K562 (cell line): ENCODE measurements at regions of chr14 and their contacts with region 1.

Region 1: GRCh38 chr14:93655078-93655750 is 133.1 kb downstream of the PRIMA1 start:
- DNase-seq: peak; percentile 15 to 43 (median 23)
- ATAC-seq: peak; percentile 63; the same call in 2 of the 3 replicates
- H3K4me3 ChIP-seq: no peak overlapping the region
- H3K27ac ChIP-seq: no peak overlapping the region
- H3K4me1 ChIP-seq: no peaks in the 10 kb centered on the region
- H3K27me3 ChIP-seq: no peaks in the 10 kb centered on the region
- CTCF ChIP-seq: peak; percentile 45 to 55 (median 50); a peak in 5 of 6 replicates
- EP300 ChIP-seq: no peak
- POLR2A ChIP-seq: no peak
- RAD21 ChIP-seq: peak; percentile 38 to 57

Region 2: DNA sequence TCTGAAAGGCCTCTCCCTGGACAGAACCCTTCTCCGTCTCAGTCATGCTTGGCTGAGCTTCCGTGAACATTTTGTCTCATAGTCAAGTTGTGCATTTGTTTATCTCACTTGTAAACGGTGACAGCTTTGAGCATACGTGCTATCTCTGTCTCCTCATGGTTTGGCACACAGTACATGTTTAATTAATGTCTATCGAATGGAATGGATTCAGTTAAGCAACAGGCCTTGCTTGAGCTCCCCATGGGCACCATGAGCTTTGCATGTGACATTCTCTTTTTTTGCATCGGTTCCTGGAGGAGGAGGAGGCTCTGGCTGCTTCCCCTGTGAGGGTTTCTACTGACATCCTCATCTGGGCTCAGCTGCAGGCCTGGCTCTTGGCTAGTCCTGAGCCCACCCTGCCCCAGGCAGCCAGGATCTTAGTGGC is 53.1 kb after region 1 on chr14:
- CTCF ChIA-PET with region 1: no interaction called
- POLR2A ChIA-PET with region 1: no interaction called
- in situ Hi-C with region 1: no loop called
- intact Hi-C with region 1: no loop called
- DNase-seq: no peak
- ATAC-seq: no peak
- H3K4me3 ChIP-seq: no peak overlapping the region
- H3K27ac ChIP-seq: no peak overlapping the region
- H3K4me1 ChIP-seq: no peaks in the 10 kb centered on the region
- H3K27me3 ChIP-seq: peaks cover 3 to 12% of the 10 kb centered on the region in 2 experiments; a peak in 3 of 5 replicates
- CTCF ChIP-seq: no peak
- EP300 ChIP-seq: no peak
- POLR2A ChIP-seq: no peak
- RAD21 ChIP-seq: no peak

Region 3: GRCh38 chr14:93880021-93880820 is 225.0 kb after region 1 on chr14:
- CTCF ChIA-PET with region 1: no interaction called
- POLR2A ChIA-PET with region 1: interaction called, 3 read pairs
- in situ Hi-C with region 1: loop called (anchors 10 kb)
- intact Hi-C with region 1: no loop called
- DNase-seq: no peak
- ATAC-seq: no peak
- H3K4me3 ChIP-seq: no peak overlapping the region
- H3K27ac ChIP-seq: no peak overlapping the region
- H3K4me1 ChIP-seq: no peaks in the 10 kb centered on the region
- H3K27me3 ChIP-seq: no peaks in the 10 kb centered on the region
- CTCF ChIP-seq: no peak
- EP300 ChIP-seq: no peak
- POLR2A ChIP-seq: no peak
- RAD21 ChIP-seq: no peak

Region 4: DNA sequence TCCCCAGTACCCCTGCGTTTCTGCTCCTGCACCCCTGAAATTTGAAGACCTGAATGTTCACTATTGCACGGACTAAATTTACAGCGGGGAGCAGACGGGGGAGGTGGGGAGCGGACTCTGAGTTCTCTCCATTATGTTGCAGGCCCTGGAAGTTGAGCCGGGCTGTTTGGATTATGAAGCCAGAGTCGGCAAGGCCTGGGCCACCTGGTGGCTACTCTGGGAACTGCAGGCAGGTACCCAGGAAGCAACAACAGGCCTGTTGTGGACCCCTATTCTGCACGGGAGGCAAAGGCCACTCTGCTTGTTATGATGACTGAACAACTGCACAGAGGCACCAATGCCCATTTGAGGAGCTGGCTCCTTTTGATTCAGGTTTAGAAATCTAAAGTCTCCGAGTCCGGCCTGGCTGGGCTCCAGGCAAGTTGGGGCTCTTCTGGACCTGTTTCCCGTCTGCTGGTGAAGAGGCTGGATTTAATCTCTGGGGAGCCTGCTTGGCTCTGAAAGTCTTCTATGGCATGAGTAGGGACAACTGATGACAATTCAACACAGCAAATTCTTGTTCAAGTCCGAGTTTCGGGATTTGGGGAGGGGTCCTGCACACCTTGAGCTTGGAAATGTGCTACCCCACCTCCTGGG is 237.8 kb after region 1 on chr14:
- CTCF ChIA-PET with region 1: no interaction called
- POLR2A ChIA-PET with region 1: no interaction called
- in situ Hi-C with region 1: loop called (anchors 10 kb)
- intact Hi-C with region 1: loop called (anchors 2 kb)
- DNase-seq: peak; percentile 47 to 60 (median 58)
- ATAC-seq: peak; percentile 82
- H3K4me3 ChIP-seq: no peak overlapping the region
- H3K27ac ChIP-seq: no peak overlapping the region
- H3K4me1 ChIP-seq: no peaks in the 10 kb centered on the region
- H3K27me3 ChIP-seq: peaks cover 0 to 17% of the 10 kb centered on the region in 2 experiments; a peak in 2 of 5 replicates
- CTCF ChIP-seq: peak; percentile 70 to 83 (median 74)
- EP300 ChIP-seq: no peak
- POLR2A ChIP-seq: no peak
- RAD21 ChIP-seq: peak in 1 of 2 experiments; percentile 59; a peak in 3 of 4 replicates

Region 5: GRCh38 chr14:93906341-93907329 is 251.4 kb after region 1 on chr14:
- CTCF ChIA-PET with region 1: no interaction called
- POLR2A ChIA-PET with region 1: no interaction called
- in situ Hi-C with region 1: no loop called
- intact Hi-C with region 1: loop called (anchors 5 kb)
- DNase-seq: peak; percentile 60 to 68 (median 68)
- ATAC-seq: peak; percentile 94
- H3K4me3 ChIP-seq: no peak overlapping the region
- H3K27ac ChIP-seq: no peak overlapping the region
- H3K4me1 ChIP-seq: no peaks in the 10 kb centered on the region
- H3K27me3 ChIP-seq: no peaks in the 10 kb centered on the region; a peak in 1 of 5 replicates
- CTCF ChIP-seq: peak; percentile 59 to 73 (median 70)
- EP300 ChIP-seq: no peak
- POLR2A ChIP-seq: no peak
- RAD21 ChIP-seq: peak; percentile 22 to 59; a peak in 2 of 4 replicates

Region 6: DNA sequence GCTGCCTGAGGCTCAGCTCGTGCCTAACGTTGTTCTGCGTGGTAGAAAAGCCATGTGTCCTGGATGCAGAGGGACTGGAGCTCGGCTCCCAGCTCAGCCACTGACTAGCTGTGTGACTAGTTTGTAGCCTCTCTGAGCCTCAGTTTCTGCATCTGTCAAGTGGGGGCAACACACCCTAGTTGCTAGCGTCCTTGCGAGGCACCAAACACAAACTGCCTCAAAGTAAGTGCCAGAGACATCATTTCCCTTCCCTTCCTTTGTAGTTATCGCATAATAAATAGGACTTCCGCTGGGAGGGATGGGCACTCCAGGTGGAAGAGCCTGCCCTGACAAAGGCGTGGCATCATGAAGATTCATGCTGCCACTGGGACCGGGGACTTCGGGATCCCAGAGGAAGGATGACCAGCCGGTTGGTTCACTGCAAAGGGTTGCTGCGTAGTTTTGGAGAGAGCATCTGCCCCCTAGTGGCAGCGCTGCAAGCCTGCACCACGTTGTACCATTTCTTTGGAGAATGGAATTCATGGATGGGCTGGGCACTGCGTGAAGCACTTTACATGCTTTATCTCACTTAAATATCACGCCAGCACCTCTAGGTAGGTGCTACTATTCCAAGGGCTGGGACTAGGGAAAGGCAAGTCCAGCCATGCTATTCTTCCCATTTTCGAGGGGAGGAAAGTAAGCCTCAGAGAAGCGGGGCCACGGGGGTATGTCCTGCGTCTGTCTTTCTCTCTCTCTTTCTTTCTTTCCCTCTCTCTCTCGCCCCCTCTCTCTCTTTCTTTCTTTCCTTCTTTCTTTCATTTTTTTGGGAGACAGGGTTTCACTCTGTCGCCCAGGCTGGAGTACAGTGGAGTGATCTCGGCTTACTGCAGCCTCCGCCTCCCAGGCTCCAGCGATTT is 346.5 kb after region 1 on chr14:
- CTCF ChIA-PET with region 1: no interaction called
- POLR2A ChIA-PET with region 1: no interaction called
- in situ Hi-C with region 1: no loop called
- intact Hi-C with region 1: loop called (anchors 5 kb)
- DNase-seq: peak; percentile 51 to 61 (median 58)
- ATAC-seq: peak; percentile 91
- H3K4me3 ChIP-seq: no peak overlapping the region
- H3K27ac ChIP-seq: no peak overlapping the region
- H3K4me1 ChIP-seq: peaks cover 0 to 6% of the 10 kb centered on the region in 2 experiments; a peak in 2 of 5 replicates
- H3K27me3 ChIP-seq: peaks cover 0 to 18% of the 10 kb centered on the region in 2 experiments; a peak in 3 of 5 replicates
- CTCF ChIP-seq: peak; percentile 81 to 88 (median 85)
- EP300 ChIP-seq: no peak
- POLR2A ChIP-seq: no peak
- RAD21 ChIP-seq: peak; percentile 46 to 74

Region 7: GRCh38 chr14:94180655-94181271 is 525.5 kb after region 1 on chr14:
- CTCF ChIA-PET with region 1: interaction called, 5 read pairs
- POLR2A ChIA-PET with region 1: no interaction called
- in situ Hi-C with region 1: loop called (anchors 25 kb)
- intact Hi-C with region 1: no loop called
- DNase-seq: peak in 2 of 4 experiments; percentile 12 to 29
- ATAC-seq: peak; percentile 69
- H3K4me3 ChIP-seq: no peak overlapping the region
- H3K27ac ChIP-seq: no peak overlapping the region
- H3K4me1 ChIP-seq: no peaks in the 10 kb centered on the region
- H3K27me3 ChIP-seq: no peaks in the 10 kb centered on the region; a peak in 2 of 5 replicates
- CTCF ChIP-seq: peak; percentile 29 to 61 (median 32); a peak in 3 of 6 replicates
- EP300 ChIP-seq: no peak
- POLR2A ChIP-seq: no peak
- RAD21 ChIP-seq: peak; percentile 25 to 58; a peak in 3 of 4 replicates